ENCODE measurements at regions of chr5 and their contacts with region 1.

Region 1: DNA sequence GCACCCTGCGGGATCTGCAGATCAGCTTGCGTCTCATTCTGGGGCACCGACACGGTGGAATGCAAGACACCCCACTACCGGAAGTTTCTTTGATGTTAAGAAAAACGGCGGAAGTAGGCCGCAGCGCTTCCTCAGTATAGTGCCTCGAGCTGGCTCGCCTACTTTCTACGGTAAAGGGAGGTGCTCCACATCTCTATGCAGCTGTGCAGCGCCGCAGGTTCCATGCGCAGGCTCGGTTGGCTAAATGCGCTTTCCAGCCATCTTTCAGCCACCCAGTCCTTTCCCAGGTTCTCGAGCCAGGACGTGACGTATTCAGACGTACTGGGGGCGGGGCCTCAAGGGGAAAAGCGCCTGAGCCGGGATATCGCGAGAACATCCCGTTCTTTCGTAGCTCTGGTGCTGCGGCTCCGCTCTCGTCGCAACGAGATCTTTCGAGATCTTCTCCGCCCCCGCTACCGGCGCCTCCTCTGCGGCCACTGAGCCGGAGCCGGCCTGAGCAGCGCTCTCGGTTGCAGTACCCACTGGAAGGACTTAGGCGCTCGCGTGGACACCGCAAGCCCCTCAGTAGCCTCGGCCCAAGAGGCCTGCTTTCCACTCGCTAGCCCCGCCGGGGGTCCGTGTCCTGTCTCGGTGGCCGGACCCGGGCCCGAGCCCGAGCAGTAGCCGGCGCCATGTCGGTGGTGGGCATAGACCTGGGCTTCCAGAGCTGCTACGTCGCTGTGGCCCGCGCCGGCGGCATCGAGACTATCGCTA is at the start of gene HSPA4:
- DNase-seq: peak; percentile 98
- H3K4me3 ChIP-seq: peak within 1 kb of the TSS; percentile 72 to 96 (median 93)
- H3K27ac ChIP-seq: peak within 1 kb of the TSS; percentile 94
- H3K4me1 ChIP-seq: peaks cover 6% of the 10 kb centered on the region
- H3K27me3 ChIP-seq: no peaks in the 10 kb centered on the region
- CTCF ChIP-seq: no peak
- total RNA-seq, gene HSPA4: 137 to 189 TPM

Region 2: DNA sequence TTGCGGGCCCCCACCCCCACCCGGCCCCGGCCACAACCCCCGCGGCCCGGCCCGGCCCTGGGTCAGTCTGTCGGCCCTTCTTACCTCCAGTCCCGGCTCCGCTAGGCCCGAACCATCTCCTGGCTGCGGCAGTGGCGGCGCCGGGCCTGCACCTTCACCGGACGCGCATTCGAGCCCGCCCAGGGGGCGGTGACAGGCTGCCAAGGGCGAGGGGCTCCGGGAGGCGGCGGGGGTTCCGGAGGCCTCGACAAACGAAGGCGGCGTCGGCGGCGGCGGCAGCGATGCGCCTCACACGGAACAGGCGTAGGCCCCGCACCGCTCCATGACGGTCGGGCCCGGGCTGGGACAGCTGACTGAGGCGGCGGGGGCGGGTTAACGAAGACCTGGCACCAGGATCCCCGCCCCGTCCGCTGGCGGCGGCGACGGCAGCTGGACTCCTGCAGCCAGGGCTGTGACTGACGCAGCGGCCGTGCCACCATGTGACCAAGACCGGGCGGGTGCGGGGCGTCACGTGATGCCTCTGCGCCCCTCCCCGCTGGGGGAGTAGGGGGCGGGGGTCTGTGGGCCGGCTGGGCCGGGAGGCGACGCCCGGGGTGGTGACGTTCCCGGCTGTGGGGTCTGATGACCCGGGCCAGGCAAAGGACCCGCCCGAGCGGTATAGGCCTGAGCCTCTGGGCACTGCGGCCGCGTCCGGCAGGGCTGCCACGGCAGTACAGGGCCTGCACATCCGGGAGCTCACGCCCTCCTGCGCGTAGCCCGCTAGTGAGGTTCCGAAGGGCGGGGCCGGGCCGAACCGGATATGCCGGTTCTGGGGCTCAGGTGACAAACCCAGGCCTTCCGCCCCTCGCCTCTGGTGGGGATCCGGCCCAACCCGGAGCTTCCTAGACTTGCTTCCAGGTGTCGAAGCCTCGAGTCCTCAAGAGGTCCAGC is 88.3 kb before region 1 on chr5 and contains the start of gene AFF4:
- CTCF ChIA-PET with region 1: no interaction called
- dilution Hi-C with region 1: loop called (anchors 5 kb)
- in situ Hi-C with region 1: loop called in 1 of 2 experiments (anchors 5 kb)
- intact Hi-C with region 1: loop called (anchors 1 kb)
- DNase-seq: peak; percentile 95
- H3K4me3 ChIP-seq: peak within 1 kb of the TSS; percentile 81 to 100 (median 96)
- H3K27ac ChIP-seq: peak within 1 kb of the TSS; percentile 99
- H3K4me1 ChIP-seq: peaks cover 6% of the 10 kb centered on the region
- H3K27me3 ChIP-seq: no peaks in the 10 kb centered on the region
- CTCF ChIP-seq: no peak
- total RNA-seq, gene AFF4: 107 to 115 TPM

Region 3: DNA sequence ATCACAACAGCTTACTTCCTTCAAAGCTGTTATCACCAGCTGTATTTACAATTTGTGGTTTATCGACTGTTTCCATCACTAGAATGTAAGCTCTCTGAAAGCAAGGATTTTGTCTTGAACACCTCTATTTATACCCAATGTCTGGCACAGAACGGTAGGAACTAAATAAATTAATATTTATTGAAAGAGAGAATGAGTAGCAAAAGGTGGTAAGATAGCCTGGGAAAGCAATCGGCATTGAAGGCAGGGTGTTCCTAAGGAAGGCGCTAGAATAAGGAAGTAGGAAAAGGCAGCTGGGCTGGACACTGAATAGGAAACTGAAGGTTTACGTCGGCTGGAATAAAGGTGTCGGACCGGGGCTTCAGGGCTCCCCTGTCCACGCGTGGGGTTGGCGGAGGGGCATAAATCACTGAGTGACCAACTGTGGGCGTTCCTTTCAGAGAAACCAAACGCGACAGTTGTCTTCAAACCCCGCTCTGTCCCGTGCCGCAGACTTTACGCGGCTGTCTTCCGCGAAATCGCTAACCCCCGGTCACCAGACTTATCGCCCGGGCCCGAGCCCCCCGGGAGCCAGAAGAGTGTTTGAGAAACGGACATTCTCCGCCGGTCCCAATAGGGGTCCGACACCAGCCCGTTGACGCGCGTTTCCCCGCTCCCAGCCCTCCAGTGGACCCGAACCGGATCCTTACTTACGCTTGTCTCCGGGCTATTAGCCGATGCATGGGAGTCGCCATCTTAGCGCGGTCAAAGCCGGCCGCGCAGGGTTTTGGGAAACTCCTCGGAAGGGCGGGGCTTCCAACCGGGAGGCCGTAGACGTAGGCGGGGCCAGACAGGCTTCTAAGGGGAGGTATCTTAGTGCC is 25.7 kb before region 1 on chr5 and contains the start of gene ZCCHC10:
- CTCF ChIA-PET with region 1: no interaction called
- dilution Hi-C with region 1: no loop called
- in situ Hi-C with region 1: no loop called
- intact Hi-C with region 1: loop called (anchors 1 kb)
- DNase-seq: peak; percentile 85
- H3K4me3 ChIP-seq: peak within 1 kb of the TSS; percentile 55 to 86 (median 80)
- H3K27ac ChIP-seq: peak within 1 kb of the TSS; percentile 88
- H3K4me1 ChIP-seq: peaks cover 11% of the 10 kb centered on the region
- H3K27me3 ChIP-seq: no peaks in the 10 kb centered on the region
- CTCF ChIP-seq: no peak
- total RNA-seq, gene ZCCHC10: 12.3 to 20.1 TPM

Region 4: GRCh38 chr5:133225671-133226152 is 174.0 kb after region 1 on chr5:
- CTCF ChIA-PET with region 1: no interaction called
- dilution Hi-C with region 1: no loop called
- in situ Hi-C with region 1: no loop called
- intact Hi-C with region 1: no loop called
- DNase-seq: peak; percentile 48
- H3K4me3 ChIP-seq: no peak overlapping the region
- H3K27ac ChIP-seq: peak overlapping the region; percentile 94
- H3K4me1 ChIP-seq: peaks cover 60% of the 10 kb centered on the region
- H3K27me3 ChIP-seq: no peaks in the 10 kb centered on the region
- CTCF ChIP-seq: no peak

Region 5: DNA sequence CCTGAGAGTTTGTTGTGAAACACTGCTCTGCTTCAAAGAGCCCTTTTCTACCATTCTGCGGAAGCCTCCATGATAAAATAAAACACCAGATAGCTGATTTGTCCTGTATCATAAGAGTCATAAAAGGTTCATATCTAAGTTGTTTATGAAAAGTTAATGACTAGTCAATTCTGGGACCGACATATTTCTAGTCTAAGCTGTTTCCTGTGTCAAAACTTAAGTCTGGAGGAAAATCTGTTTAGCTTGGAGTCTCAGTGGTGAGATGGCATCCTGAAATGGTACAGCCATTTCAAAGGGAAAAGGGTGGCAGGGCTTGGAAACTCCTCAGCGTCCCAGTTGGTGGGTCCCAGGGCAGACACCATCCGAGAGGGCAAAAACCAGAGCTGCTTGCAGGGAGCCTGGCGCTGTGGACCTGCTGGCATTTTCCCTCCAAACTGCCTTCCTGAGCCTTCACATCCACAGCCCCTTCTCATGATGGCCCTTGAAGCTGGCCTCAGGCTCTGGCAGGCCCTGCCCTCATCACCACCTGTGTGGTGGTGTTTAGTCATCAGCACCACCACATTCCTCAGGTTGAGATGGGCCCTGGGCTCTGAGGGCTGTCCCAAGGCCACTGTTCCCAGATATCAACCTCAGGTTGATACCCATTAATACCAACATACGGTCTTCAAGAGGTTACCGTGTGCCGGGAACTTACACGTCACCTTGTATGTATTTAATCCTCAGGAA is 184.1 kb after region 1 on chr5:
- CTCF ChIA-PET with region 1: no interaction called
- dilution Hi-C with region 1: no loop called
- in situ Hi-C with region 1: no loop called
- intact Hi-C with region 1: no loop called
- DNase-seq: peak; percentile 42
- H3K4me3 ChIP-seq: no peak overlapping the region
- H3K27ac ChIP-seq: no peak overlapping the region
- H3K4me1 ChIP-seq: peaks cover 42% of the 10 kb centered on the region
- H3K27me3 ChIP-seq: no peaks in the 10 kb centered on the region
- CTCF ChIP-seq: no peak

Measured in mammary epithelial cell (primary cell).